ENCODE measurements at regions of chr2 and their contacts with region 1.

Region 1: DNA sequence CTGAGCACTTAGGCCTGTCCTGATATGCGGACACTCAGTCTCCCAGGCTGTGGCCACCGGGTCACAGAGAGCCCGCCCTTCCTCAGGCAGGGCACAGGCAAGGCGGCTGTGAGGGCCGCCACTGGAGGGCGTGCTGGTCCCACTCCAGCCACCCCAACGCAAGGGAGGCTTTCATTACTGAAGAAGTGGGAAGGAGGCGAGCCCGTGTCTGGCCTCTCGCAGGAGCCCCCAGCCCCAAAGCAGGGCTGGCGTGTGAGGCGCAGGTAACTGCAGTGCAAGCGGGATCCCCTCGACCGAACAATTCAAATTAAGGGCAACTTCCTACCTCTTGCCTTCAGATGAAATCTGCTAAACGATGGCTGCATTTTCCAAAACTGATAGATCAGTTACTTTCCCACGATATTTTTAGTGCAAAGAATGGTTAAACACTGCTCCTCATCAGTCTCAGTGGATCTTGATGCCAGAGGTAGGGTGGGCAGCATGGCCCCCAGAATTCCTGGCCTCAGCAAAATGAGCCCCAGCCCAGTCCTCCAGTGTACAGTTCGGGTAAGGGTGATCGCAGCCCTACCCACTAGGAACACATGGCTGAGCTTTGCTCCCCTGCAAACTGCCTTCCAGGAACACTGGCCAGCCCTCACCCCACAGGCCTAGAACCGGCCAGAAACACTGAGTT is 97.2 kb downstream of the SEPTIN10 start:
- DNase-seq: peak; percentile 55
- ATAC-seq: peak; percentile 44
- H3K4me3 Mint-ChIP-seq: no peak overlapping the region
- H3K27ac Mint-ChIP-seq: no peak overlapping the region
- H3K4me1 Mint-ChIP-seq: no peaks in the 10 kb centered on the region
- H3K27me3 Mint-ChIP-seq: no peaks in the 10 kb centered on the region

Region 2: DNA sequence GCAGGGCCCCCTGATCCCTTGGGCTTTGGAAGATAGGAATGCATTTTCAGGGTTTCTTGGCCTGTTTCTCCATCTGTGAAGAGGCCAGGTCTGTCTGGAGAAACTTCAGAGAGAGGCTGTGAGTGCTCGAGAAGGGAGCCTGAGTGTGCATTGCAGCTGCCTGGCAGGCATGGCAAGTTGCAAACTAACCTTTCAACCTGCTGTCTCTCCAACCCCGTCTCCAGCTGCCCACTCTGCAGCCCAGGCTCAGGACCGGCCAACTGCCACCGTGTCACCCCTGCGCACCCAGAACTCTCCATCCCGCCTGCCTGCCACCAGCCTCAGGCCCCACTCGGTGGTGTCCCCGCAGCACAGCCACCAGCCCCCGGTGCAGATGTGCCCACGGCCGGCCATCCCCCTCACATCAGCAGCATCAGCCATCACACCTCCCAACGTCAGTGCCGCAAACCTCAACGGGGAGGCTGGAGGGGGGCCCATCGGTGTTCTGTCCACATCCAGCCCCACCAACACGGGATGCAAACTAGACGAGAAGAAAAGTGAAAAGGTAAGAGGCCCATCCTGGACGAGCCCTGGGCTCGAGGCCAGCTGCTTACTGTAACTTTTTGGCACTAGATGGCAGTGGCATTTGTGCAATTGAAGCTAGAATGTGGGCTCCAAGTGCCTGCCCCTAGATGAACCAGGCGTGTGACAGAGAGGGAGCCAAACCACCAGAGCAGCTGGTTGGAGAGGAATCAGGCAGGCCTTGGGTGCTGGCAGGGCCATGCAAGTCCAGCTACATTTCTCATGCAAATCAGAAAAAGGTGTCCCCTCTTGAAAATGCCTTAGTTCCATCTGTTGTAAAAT is 67.4 kb before region 1 on chr2:
- CTCF ChIA-PET with region 1: no interaction called
- POLR2A ChIA-PET with region 1: no interaction called
- intact Hi-C with region 1: loop called in 1 of 2 experiments (anchors 2 kb)
- DNase-seq: no peak
- ATAC-seq: no peak
- H3K4me3 Mint-ChIP-seq: no peak overlapping the region
- H3K27ac Mint-ChIP-seq: no peak overlapping the region
- H3K4me1 Mint-ChIP-seq: peaks cover 4% of the 10 kb centered on the region
- H3K27me3 Mint-ChIP-seq: no peaks in the 10 kb centered on the region